ENCODE measurements at regions of chr5 and their contacts with region 1.

Region 1: DNA sequence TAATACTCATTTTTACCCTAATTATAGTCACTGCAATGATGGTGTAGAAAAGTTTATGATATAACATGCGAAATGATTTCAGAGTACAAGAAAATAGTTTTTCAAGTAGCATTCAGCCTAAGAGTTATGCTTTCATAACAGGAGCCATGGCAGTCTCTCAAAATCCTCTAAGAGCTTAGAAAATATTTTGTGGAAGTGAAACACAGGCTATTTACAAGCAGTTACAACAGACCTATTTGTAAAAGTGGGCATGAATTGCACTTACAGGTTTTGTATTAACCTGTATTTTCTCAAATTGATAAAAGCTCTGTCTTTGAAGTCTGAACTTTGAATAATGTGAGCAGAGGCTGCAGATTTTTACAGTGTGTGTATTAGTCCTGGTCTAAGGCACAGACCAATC is 523.3 kb downstream of the LRRC70 start:
- DNase-seq: no peak
- H3K4me3 Mint-ChIP-seq: no peak overlapping the region
- H3K27ac Mint-ChIP-seq: no peak overlapping the region
- H3K4me1 Mint-ChIP-seq: no peaks in the 10 kb centered on the region
- H3K27me3 Mint-ChIP-seq: no peaks in the 10 kb centered on the region
- CTCF ChIP-seq: no peak

Region 2: DNA sequence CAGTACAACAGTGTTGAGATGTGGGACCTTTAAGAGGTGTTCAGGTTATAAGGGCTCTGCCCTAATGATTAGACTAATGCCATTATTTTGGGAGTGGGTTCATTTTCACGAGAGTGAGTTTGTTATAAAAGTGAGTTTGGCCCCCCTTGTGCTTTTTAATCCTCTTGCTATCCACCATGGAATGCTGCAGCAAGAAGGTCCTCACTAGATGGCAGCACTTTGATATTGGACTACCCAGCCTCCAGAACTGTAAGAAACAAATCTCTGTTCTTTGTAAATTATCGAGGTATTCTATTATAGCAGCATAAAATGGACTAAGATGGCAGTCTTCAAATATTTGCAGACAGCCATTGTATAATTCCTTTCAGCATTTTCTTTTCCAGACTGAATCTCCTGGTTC is 310.8 kb before region 1 on chr5:
- CTCF ChIA-PET with region 1: no interaction called
- intact Hi-C with region 1: loop called (anchors 5 kb)
- DNase-seq: peak; percentile 24
- H3K4me3 Mint-ChIP-seq: no peak overlapping the region
- H3K27ac Mint-ChIP-seq: no peak overlapping the region
- H3K4me1 Mint-ChIP-seq: no peaks in the 10 kb centered on the region
- H3K27me3 Mint-ChIP-seq: peaks cover 9% of the 10 kb centered on the region
- CTCF ChIP-seq: peak; percentile 40

Region 3: DNA sequence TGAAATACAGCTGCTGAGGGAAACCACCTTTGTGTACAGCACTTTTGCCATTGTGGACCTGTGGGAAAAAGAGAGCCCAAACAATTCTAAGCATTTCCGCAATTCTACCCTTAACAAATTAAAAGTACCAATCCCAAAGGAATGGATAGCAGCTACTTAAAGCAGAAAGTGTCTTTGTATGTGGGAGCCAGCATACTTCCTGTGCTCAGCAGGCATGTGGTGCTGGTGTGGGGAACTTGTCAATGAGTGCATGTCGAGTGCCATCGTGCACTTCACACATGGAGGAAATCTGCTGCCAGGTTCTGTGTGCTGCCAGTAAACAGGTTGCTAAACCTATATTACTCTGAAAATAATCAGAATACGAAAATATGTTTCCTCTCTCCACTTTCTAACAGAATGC is 124.2 kb before region 1 on chr5:
- CTCF ChIA-PET with region 1: no interaction called
- intact Hi-C with region 1: no loop called
- DNase-seq: no peak
- H3K4me3 Mint-ChIP-seq: no peak overlapping the region
- H3K27ac Mint-ChIP-seq: no peak overlapping the region
- H3K4me1 Mint-ChIP-seq: no peaks in the 10 kb centered on the region
- H3K27me3 Mint-ChIP-seq: no peaks in the 10 kb centered on the region
- CTCF ChIP-seq: no peak

Region 4: DNA sequence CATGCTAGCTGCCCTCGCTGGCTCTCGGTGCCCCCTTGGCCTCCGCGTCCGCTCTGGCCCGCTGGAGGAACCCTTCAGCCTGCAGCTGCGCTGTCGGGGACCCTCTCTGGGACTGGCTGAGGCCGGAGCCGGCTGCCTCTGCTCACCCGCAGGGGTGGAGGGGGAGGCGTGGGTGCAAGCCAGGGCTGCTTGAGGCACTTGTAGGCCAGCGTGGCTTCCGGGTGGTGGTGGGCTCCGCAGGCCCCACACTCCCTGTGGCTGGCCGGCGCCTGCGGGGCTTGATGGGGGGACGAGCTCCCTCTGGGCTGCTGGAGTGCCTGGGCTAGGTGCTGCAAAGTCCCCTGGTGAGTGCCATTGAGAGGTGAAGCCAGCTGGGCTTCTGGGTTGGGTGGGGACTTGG is 93.7 kb before region 1 on chr5:
- CTCF ChIA-PET with region 1: no interaction called
- intact Hi-C with region 1: no loop called
- DNase-seq: no peak
- H3K4me3 Mint-ChIP-seq: no peak overlapping the region
- H3K27ac Mint-ChIP-seq: no peak overlapping the region
- H3K4me1 Mint-ChIP-seq: no peaks in the 10 kb centered on the region
- H3K27me3 Mint-ChIP-seq: no peaks in the 10 kb centered on the region
- CTCF ChIP-seq: no peak

Region 5: DNA sequence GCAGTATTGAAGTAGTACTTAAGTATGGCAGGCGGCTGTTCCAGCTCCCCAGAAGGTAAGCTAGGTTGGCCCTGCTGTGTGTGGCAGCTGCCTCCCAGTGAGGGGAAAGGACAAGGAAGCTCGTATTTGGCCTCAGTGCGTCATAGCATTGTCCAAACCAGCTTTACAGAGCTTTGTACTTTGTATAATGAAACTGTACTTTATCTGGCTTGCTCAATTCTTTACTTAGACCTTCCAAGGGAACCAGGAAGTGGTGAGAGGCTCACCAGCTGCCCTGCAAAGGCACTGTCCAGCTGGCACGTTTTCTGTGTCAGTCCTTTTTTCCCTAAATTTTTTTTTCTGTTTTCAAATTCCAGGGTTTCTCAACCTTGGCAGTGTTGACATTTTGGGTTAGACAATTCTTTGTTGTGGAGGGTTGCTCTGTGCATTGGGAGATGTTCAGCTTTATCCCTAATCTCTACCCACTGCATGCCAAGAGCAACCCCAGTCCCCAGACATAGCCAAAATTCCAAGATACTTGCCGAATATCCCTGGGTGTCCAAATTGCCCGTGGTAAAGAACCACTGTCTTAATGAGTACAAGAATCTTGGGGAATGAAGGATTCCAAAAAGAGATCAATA is 48.7 kb before region 1 on chr5:
- CTCF ChIA-PET with region 1: no interaction called
- intact Hi-C with region 1: loop called (anchors 5 kb)
- DNase-seq: peak; percentile 52
- H3K4me3 Mint-ChIP-seq: no peak overlapping the region
- H3K27ac Mint-ChIP-seq: no peak overlapping the region
- H3K4me1 Mint-ChIP-seq: peaks cover 52% of the 10 kb centered on the region
- H3K27me3 Mint-ChIP-seq: no peaks in the 10 kb centered on the region
- CTCF ChIP-seq: no peak

Region 6: DNA sequence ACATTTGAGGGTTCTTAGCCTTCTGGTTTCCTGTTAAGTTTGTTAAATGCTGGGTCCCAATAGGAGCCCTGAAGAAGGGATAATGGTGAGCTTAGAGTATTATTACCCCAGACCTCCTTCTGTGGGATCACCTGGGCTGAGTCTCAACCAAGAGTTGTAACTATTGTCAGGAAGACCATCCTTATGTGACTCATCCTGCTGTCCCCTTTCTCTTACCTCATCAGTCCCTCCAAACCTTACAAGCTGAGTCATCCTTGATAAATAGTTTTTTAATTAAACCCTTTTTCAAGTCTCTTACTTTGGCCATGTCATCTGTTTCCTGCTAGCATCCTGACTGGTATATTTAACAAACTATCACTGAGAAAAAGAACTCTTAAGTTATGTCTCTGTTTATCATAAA is 20.5 kb before region 1 on chr5:
- CTCF ChIA-PET with region 1: no interaction called
- intact Hi-C with region 1: no loop called
- DNase-seq: no peak
- H3K4me3 Mint-ChIP-seq: no peak overlapping the region
- H3K27ac Mint-ChIP-seq: no peak overlapping the region
- H3K4me1 Mint-ChIP-seq: no peaks in the 10 kb centered on the region
- H3K27me3 Mint-ChIP-seq: no peaks in the 10 kb centered on the region
- CTCF ChIP-seq: no peak